Activated CD4-positive, alpha-beta memory T cell treated with anti-CD3 and anti-CD28 coated beads for 36 hours (primary cell): ENCODE measurements at regions of chr13 and their contacts with region 1.

Region 1: DNA sequence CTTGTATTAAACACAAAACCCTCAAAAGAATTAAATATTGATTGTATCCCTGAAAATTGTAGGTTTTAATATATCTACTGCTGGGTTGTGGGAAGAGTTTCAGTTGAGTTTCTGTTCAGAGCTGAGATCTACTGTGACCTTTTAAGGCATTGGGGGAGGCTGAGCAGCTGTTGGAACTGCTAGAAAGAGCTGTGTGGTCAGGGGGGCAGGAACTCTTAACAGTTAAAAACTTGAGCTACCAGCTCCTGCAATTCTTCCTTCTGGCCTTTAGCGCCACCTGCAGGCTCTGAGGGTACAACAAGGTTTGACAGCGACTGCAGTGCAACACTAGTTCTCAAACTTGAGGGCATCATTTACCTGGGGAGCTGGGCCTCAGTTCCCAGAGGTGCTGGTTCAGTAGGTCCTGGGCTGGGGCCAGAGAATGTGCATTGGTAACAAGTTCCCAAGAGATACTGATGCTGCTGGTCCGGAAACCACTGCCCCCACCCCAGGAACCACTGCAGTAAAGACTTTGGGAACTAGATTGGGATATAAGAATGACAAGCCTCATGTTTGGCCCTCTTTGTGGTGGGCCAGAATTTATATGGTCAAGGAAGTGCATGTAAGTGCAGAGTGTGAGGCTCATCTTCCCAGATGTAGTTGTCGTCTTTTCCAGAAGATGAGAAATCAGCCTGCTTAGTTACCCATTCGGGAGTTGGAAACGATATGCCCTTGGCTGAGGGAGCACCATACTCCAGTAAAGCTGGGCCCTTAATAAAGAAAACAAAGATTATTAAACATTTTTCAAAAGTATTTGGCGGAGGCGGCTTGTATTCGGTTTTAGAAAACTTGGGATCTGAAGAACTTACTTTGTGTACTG is 2.6 kb downstream of the RNASEH2B start:
- DNase-seq: peak; percentile 95
- H3K4me3 Mint-ChIP-seq: peak overlapping the region; percentile 94
- H3K27ac Mint-ChIP-seq: peak overlapping the region; percentile 98
- H3K4me1 Mint-ChIP-seq: peaks cover 51% of the 10 kb centered on the region
- H3K27me3 Mint-ChIP-seq: no peaks in the 10 kb centered on the region

Region 2: DNA sequence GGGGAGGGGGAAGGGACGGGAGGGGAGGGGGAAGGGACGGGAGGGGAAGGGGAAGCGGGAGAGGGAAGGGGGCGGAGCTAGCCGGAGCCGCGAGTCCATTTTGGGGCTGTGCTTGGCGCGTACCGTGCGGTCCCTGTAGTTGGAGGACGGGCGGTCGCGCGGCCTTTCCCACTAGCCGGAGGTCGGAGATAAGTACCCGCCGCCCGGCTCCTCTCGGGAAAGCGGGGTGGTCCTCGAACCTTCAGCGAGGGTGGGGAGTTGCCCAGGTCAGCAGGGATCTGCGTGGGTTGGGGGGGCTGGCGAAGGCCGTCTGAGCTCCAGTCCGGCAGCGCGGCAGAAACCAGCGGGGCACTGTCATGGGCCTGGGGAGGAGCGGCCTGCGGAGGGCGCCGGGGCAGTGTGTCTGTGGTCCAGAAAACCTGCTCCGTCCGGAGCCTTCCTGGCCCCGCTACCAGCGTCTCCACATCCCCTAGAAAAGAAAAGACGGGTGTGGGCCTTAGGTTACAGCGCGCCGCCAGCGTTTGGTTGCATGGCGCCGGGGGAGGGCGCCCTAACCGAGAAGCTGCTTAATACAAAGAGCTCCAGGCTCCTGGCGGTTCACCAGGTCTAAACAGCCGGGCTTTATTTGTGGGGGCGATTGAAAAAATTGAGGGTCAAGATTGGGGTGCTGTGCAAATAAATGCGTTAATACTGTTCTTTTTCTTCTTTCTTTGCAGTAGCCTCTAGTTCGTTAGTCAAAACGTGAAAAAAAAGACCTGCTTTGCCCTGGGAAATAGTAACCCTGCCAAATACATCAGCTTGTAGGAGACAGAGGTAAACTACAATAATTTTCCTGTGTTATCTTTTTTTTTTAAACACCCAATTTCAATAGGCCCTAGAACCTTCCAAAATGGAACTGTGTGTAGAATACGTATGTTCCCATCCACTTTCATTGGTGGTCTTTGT is 914.9 kb before region 1 on chr13 and contains the start of gene TRIM13:
- CTCF ChIA-PET with region 1: interaction called, 17 read pairs
- POLR2A ChIA-PET with region 1: no interaction called
- intact Hi-C with region 1: loop called (anchors 1 kb)
- DNase-seq: peak; percentile 88
- H3K4me3 Mint-ChIP-seq: peak within 1 kb of the TSS; percentile 81
- H3K27ac Mint-ChIP-seq: peak within 1 kb of the TSS; percentile 86
- H3K4me1 Mint-ChIP-seq: peaks cover 44% of the 10 kb centered on the region
- H3K27me3 Mint-ChIP-seq: no peaks in the 10 kb centered on the region
- total RNA-seq, gene TRIM13: 9.8 to 11.6 TPM

Region 3: DNA sequence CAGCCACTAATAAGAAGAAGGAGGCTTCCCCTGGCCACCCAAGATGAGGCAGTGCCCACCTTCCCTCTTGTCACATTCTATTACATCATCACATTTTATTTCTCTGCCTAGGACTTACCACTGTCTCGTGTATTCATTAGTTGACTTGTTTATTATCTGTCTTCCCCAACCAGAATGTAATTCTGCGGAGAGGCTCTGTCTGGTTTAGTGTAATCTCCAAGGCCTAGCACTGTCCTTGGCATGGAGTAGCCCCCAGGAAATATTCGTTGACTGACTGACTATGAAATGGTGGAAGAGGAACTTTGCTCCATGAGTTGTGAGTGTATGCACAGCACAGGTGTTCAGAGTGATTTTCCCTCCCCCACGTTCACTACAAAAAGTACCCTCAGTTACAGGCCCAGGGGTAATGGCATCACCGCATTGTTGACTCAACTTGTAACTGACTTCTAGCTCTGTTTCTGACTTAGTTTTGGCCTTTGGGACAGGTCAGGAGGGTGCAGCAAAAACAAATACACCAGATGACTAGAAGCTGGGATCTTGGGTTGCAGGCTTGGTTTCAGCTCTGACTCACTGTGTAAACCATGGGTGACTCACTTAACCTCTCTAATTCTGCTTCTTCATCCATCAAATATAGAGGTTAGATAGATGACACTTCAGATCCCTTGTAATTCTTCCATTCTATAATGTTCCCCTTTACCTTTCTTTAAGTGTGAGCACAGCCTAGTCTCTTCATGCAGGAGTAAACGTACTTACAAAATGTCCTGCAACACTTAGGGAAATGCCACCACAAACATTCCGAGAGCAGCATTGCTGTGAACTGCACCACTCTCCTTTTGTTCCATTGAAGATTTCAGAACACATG is 667.2 kb before region 1 on chr13:
- CTCF ChIA-PET with region 1: no interaction called
- POLR2A ChIA-PET with region 1: no interaction called
- intact Hi-C with region 1: loop called (anchors 5 kb)
- DNase-seq: peak; percentile 85
- H3K4me3 Mint-ChIP-seq: no peak overlapping the region
- H3K27ac Mint-ChIP-seq: no peak overlapping the region
- H3K4me1 Mint-ChIP-seq: peaks cover 41% of the 10 kb centered on the region
- H3K27me3 Mint-ChIP-seq: peaks cover 29% of the 10 kb centered on the region

Region 4: GRCh38 chr13:50531917-50532899 is 380.0 kb before region 1 on chr13:
- CTCF ChIA-PET with region 1: interaction called, 3 read pairs
- POLR2A ChIA-PET with region 1: no interaction called
- intact Hi-C with region 1: loop called (anchors 10 kb)
- DNase-seq: no peak
- H3K4me3 Mint-ChIP-seq: no peak overlapping the region
- H3K27ac Mint-ChIP-seq: no peak overlapping the region
- H3K4me1 Mint-ChIP-seq: peaks cover 15% of the 10 kb centered on the region
- H3K27me3 Mint-ChIP-seq: no peaks in the 10 kb centered on the region

Region 5: DNA sequence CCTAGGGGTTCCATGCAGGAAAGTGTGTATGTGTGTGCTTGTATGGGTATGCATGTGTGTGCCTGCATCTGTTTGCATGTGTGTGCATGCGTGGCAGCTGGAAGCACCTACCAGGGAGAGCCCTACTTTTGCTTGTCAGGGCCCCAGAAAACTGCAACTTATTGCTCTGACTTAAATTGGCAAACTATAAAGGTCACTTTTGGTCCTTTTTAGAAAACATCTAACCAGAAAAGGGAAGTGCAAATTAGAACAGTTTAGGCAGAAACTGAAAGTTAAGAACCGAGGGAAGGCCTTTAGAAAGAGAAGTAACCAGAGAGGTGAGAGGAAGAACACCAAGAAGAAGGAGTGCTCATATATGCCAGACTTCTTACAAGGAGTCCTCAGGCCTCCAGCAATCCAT is 101.2 kb before region 1 on chr13:
- CTCF ChIA-PET with region 1: interaction called, 18 read pairs
- POLR2A ChIA-PET with region 1: no interaction called
- intact Hi-C with region 1: no loop called
- DNase-seq: no peak
- H3K4me3 Mint-ChIP-seq: no peak overlapping the region
- H3K27ac Mint-ChIP-seq: no peak overlapping the region
- H3K4me1 Mint-ChIP-seq: no peaks in the 10 kb centered on the region
- H3K27me3 Mint-ChIP-seq: peaks cover 2% of the 10 kb centered on the region

Region 6: DNA sequence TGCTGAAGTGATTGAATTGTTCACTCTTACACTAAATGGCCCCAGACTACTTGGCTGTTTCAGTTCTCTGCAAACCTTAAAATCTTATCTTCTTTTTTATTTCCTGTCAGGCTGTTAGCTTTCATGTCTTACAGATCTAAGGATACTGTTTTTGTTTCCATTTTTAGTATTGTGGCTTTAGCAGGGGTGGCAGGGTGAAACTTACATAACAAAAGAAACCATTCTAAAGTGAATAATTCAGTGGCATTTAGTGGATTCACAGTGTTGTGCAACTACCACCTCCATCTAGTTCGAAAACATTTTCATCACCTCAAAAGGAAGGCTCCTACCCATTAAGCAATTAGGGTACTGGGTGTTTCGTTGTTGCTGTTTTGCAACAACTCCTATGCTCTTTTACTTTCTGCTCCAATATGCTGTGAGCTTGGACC is 913.0 kb after region 1 on chr13:
- CTCF ChIA-PET with region 1: no interaction called
- POLR2A ChIA-PET with region 1: no interaction called
- intact Hi-C with region 1: loop called (anchors 5 kb)
- DNase-seq: no peak
- H3K4me3 Mint-ChIP-seq: peak overlapping the region; percentile 52
- H3K27ac Mint-ChIP-seq: peak overlapping the region; percentile 84
- H3K4me1 Mint-ChIP-seq: peaks cover 81% of the 10 kb centered on the region
- H3K27me3 Mint-ChIP-seq: no peaks in the 10 kb centered on the region